Panc1 (cell line): ENCODE measurements at regions of chr14 and their contacts with region 1.

Region 1: GRCh38 chr14:67977434-67978034 is 158.0 kb downstream of the RAD51B start:
- DNase-seq: no peak
- ATAC-seq: no peak; the same call in 1 of the 2 replicates
- H3K4me3 ChIP-seq: no peak overlapping the region
- H3K27ac ChIP-seq: peak overlapping the region; percentile 79; the same call in 1 of the 2 replicates
- H3K4me1 ChIP-seq: peaks cover 5% of the 10 kb centered on the region; the same call in 1 of the 2 replicates
- H3K27me3 ChIP-seq: no peaks in the 10 kb centered on the region
- CTCF ChIP-seq: no peak

Region 2: GRCh38 chr14:67467179-67468080 is 510.1 kb before region 1 on chr14:
- CTCF ChIA-PET with region 1: no interaction called
- POLR2A ChIA-PET with region 1: no interaction called
- in situ Hi-C with region 1: no loop called
- intact Hi-C with region 1: no loop called
- DNase-seq: no peak
- ATAC-seq: no peak
- H3K4me3 ChIP-seq: no peak overlapping the region
- H3K27ac ChIP-seq: no peak overlapping the region
- H3K4me1 ChIP-seq: no peaks in the 10 kb centered on the region
- H3K27me3 ChIP-seq: no peaks in the 10 kb centered on the region
- CTCF ChIP-seq: no peak; the same call in 1 of the 2 replicates

Region 3: DNA sequence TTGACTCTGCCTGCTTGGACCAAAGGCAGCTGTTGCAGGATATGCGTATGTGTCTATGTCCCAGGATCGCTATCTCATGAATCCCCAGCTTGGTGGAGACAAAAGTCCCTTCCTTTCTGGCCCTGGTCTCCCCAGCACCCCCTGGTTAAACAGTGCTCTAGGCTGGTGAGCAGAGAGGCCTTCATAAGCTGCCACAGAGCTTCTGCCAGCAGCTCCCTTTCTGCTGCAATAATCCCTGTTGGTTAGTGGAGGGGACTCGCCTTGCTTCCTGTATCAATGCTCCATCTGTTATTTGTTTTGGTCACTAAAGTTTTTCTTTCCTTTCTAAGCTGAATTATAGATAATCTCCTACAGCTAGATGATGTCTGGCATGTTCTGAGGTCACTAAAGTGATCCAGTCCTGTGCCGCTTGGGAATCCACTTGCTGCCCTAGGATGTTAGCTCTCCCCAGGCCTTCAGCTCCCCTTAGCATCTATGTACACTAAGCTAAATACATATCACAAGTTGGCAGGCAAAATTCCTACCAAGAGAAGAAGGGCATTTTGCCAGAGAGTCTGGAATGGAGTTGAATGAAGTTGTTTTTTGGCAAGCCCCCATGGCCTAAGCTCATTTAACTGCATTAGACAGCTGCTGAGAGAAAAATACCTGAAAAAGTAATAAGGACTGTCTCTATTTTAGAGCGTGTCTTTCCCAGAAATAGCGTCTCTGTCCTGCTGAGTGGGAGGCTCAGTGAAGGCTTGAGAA is 228.0 kb before region 1 on chr14:
- CTCF ChIA-PET with region 1: no interaction called
- POLR2A ChIA-PET with region 1: no interaction called
- in situ Hi-C with region 1: no loop called
- intact Hi-C with region 1: no loop called
- DNase-seq: no peak
- ATAC-seq: no peak
- H3K4me3 ChIP-seq: no peak overlapping the region
- H3K27ac ChIP-seq: no peak overlapping the region
- H3K4me1 ChIP-seq: no peaks in the 10 kb centered on the region
- H3K27me3 ChIP-seq: no peaks in the 10 kb centered on the region
- CTCF ChIP-seq: no peak

Region 4: DNA sequence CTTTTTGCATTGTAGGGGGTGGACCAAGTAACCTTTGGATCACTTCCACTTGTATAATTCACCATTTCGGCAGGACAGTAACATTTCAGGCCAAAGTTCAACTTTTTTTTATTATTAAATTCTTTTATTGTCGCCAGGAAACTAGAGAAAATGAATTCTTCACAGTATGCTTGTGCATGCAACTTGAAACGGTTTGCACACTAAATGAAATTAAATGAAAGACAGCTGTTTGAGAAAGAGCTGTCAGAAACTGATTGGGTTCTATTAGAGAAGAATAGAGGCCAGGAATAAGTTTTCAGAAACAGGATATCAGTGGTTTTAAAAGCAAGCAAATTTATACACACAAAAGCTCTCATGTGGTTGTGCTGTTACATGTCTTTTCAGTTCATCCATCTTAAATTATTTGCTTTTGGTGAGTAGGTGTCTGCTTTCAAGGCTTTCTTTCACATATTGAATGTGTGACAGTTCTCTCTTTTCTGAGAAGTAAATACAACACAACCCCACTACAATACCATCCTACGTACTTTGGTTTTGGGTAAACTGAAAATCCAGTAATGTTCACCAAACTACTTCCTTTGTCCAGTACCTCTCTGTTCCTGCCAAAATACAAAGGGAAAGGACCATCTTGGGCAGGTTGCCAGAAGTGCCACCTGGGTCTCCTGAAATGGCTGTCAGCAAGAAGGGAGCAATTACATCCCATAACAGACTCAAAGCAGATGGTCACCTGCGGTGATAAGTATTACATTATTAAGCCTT is 133.7 kb after region 1 on chr14:
- CTCF ChIA-PET with region 1: no interaction called
- POLR2A ChIA-PET with region 1: interaction called, 12 read pairs
- in situ Hi-C with region 1: no loop called
- intact Hi-C with region 1: no loop called
- DNase-seq: no peak
- ATAC-seq: no peak
- H3K4me3 ChIP-seq: no peak overlapping the region
- H3K27ac ChIP-seq: peak overlapping the region; percentile 44; the same call in 1 of the 2 replicates
- H3K4me1 ChIP-seq: no peaks in the 10 kb centered on the region
- H3K27me3 ChIP-seq: no peaks in the 10 kb centered on the region
- CTCF ChIP-seq: no peak